ENCODE measurements at regions of chr10 and their contacts with region 1.

Region 1: GRCh38 chr10:79052291-79053080 is 16.3 kb upstream of the ZMIZ1 start:
- DNase-seq: peak in 5 of 6 donors; percentile 21 to 62 (median 46)
- ATAC-seq: peak in 3 of 4 donors; percentile 17 to 56 (median 26)
- H3K4me3 ChIP-seq: no peak overlapping the region
- H3K27ac ChIP-seq: no peak overlapping the region
- H3K4me1 ChIP-seq: peaks cover 8 to 43% (median 14%) of the 10 kb centered on the region in 3 donors
- H3K27me3 ChIP-seq: no peaks in the 10 kb centered on the region
- CTCF ChIP-seq: peak in 3 of 4 donors; percentile 12 to 49 (median 22)

Region 2: GRCh38 chr10:78634389-78634815 is 418.1 kb before region 1 on chr10:
- intact Hi-C with region 1: no loop called
- DNase-seq: no peak
- ATAC-seq: peak; percentile 51 to 77 (median 64)
- H3K4me3 ChIP-seq: no peak overlapping the region
- H3K27ac ChIP-seq: no peak overlapping the region
- H3K4me1 ChIP-seq: peaks cover 0 to 3% (median 0%) of the 10 kb centered on the region in 3 donors
- H3K27me3 ChIP-seq: no peaks in the 10 kb centered on the region
- CTCF ChIP-seq: no peak

Region 3: DNA sequence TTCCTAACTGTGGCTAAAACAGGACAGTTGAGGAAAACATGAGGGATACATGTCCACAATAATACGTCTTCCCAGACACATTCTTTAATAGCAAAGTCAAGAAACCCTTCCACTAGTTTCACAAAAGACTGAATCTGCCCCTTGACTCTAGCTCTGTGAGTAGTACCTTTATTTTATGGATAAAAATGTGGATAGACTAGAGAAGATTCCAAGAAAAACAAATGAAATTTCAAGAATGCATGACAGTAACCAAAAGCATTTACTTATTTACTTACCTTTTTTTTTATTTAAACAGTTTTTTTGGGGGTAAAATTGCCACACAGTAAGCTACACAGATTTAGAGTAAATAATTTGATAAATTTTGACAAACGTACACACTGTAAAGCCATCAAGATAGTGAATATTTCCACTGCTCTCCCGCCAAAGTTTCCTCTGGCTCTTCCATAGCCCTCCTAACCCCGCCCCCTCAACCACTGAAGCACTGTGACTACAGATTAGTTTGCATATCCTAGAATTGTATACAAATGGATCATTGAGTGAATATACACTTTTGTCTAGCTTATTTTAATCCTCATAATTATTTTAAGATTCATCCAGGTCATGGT is 404.1 kb before region 1 on chr10:
- intact Hi-C with region 1: no loop called
- DNase-seq: no peak
- ATAC-seq: no peak
- H3K4me3 ChIP-seq: no peak overlapping the region
- H3K27ac ChIP-seq: no peak overlapping the region
- H3K4me1 ChIP-seq: no peaks in the 10 kb centered on the region
- H3K27me3 ChIP-seq: no peaks in the 10 kb centered on the region
- CTCF ChIP-seq: no peak

Region 4: DNA sequence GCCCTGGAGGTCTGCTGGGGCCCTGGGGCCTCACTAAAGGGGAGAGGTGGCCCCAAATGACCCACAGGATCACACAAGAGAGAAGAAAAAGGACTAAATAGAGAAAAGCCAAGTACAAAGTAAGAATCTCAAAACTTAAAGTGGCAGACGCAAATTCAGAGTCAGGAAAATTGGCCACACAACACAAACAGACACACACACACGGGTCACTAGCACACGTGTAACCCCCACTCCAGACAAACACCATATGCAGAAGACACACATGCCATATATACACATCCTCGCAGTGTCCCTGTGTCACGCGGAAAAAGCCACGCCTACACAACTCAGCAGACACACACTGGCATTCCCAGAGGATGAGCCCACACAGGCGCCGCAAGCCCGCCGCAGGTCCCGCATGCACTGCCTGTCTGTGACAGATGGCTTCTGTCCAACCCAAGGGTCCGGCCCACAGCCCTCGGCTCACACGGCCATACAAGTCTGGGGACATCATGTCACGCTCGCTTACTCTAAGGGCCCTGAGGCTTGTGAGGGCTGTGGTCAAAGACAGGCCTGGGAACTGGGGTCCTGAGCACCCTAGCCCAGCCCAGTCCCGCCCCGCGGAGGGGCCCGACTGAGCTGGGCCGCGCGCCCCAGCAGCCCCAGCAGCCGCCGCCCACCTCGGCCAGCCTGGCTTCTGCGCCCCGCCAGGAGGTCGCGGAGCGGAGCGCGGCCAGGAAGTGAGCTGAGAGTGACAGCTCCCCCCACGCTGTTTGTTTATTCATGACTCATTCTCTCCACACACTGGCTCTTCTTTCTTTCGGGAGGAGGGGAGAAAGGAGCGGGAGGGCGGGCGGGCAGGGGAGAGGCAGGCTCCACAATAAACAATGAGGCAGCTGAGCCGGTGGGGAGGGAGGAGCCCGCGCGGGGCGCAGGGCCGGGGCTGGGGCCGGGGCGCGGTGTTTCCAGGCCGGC is 79.3 kb before region 1 on chr10:
- intact Hi-C with region 1: loop called in 1 of 3 experiments (anchors 10 kb)
- DNase-seq: peak; percentile 56 to 87 (median 70)
- ATAC-seq: peak; percentile 66 to 81 (median 78)
- H3K4me3 ChIP-seq: peak overlapping the region; percentile 12 to 52 (median 38)
- H3K27ac ChIP-seq: peak overlapping the region; percentile 93 to 97 (median 94)
- H3K4me1 ChIP-seq: peaks cover 20 to 24% (median 23%) of the 10 kb centered on the region in 3 donors
- H3K27me3 ChIP-seq: no peaks in the 10 kb centered on the region
- CTCF ChIP-seq: no peak

Region 5: GRCh38 chr10:79196470-79197461 is 144.3 kb after region 1 on chr10:
- intact Hi-C with region 1: no loop called
- DNase-seq: peak; percentile 68 to 97 (median 86)
- ATAC-seq: peak; percentile 59 to 72 (median 68)
- H3K4me3 ChIP-seq: no peak overlapping the region
- H3K27ac ChIP-seq: no peak overlapping the region
- H3K4me1 ChIP-seq: peaks cover 6 to 11% (median 7%) of the 10 kb centered on the region in 3 donors
- H3K27me3 ChIP-seq: no peaks in the 10 kb centered on the region
- CTCF ChIP-seq: peak; percentile 90 to 96 (median 95)

Measured in pancreas (tissue), 10 donors.